Right ventricle myocardium inferior (tissue), 1 donor: ENCODE measurements at regions of chr12 and their contacts with region 1.

Region 1: GRCh38 chr12:115096588-115097397 is 412.8 kb upstream of the TBX3 start:
- DNase-seq: peak; percentile 40
- ATAC-seq: peak; percentile 96

Region 2: GRCh38 chr12:114704096-114704495 is 392.7 kb before region 1 on chr12:
- intact Hi-C with region 1: loop called (anchors 10 kb)
- DNase-seq: no peak
- ATAC-seq: peak; percentile 92